ENCODE measurements at regions of chr14 and their contacts with region 1.

Region 1: GRCh38 chr14:97185186-97185585 is 388.0 kb downstream of the VRK1 start:
- DNase-seq: peak in 1 of 2 donors; percentile 64
- ATAC-seq: peak; percentile 55 to 72 (median 60)
- H3K4me3 ChIP-seq: no peak overlapping the region
- H3K4me3 Mint-ChIP-seq: no peak overlapping the region
- H3K27ac ChIP-seq: no peak overlapping the region
- H3K27ac Mint-ChIP-seq: peak overlapping the region in 1 of 2 donors; percentile 27
- H3K4me1 ChIP-seq: no peaks in the 10 kb centered on the region
- H3K4me1 Mint-ChIP-seq: peaks cover 12 to 16% of the 10 kb centered on the region in 2 donors
- H3K27me3 ChIP-seq: no peaks in the 10 kb centered on the region
- H3K27me3 Mint-ChIP-seq: peaks cover 6 to 20% of the 10 kb centered on the region in 2 donors
- CTCF ChIP-seq: no peak

Region 2: DNA sequence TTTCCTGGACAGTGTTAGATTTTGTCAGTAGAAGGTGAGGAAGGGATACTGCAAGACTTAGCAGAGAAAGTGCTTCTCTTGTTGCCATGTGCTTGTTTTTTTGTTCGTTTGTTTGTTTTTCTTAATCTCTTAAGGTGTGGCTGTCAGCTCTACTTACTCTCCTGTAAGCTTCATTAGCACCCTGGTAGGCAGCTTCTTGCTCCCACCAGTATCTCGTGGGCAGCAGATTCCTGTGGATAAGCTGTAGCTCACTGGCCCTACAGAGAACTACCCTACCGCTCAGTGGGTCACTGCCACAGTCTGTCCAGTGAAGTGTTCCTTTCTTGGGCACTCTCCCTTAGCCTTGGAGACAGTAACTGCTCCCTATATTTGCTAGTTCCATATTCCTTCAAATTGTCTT is 357.9 kb before region 1 on chr14:
- intact Hi-C with region 1: no loop called
- DNase-seq: no peak
- ATAC-seq: no peak
- H3K4me3 ChIP-seq: no peak overlapping the region
- H3K4me3 Mint-ChIP-seq: no peak overlapping the region
- H3K27ac ChIP-seq: no peak overlapping the region
- H3K27ac Mint-ChIP-seq: no peak overlapping the region
- H3K4me1 ChIP-seq: no peaks in the 10 kb centered on the region
- H3K4me1 Mint-ChIP-seq: peaks cover 19 to 38% of the 10 kb centered on the region in 2 donors
- H3K27me3 ChIP-seq: no peaks in the 10 kb centered on the region
- H3K27me3 Mint-ChIP-seq: no peaks in the 10 kb centered on the region
- CTCF ChIP-seq: no peak

Region 3: GRCh38 chr14:97581016-97581415 is 395.8 kb after region 1 on chr14:
- intact Hi-C with region 1: loop called (anchors 10 kb)
- DNase-seq: no peak
- ATAC-seq: no peak
- H3K4me3 ChIP-seq: no peak overlapping the region
- H3K4me3 Mint-ChIP-seq: no peak overlapping the region
- H3K27ac ChIP-seq: no peak overlapping the region
- H3K27ac Mint-ChIP-seq: no peak overlapping the region
- H3K4me1 ChIP-seq: no peaks in the 10 kb centered on the region
- H3K4me1 Mint-ChIP-seq: peaks cover 6 to 13% of the 10 kb centered on the region in 2 donors
- H3K27me3 ChIP-seq: no peaks in the 10 kb centered on the region
- H3K27me3 Mint-ChIP-seq: peaks cover 0 to 4% of the 10 kb centered on the region in 2 donors
- CTCF ChIP-seq: no peak

Region 4: GRCh38 chr14:97788364-97788763 is 603.2 kb after region 1 on chr14:
- intact Hi-C with region 1: loop called (anchors 10 kb)
- DNase-seq: no peak
- ATAC-seq: no peak
- H3K4me3 ChIP-seq: no peak overlapping the region
- H3K4me3 Mint-ChIP-seq: no peak overlapping the region
- H3K27ac ChIP-seq: no peak overlapping the region
- H3K27ac Mint-ChIP-seq: no peak overlapping the region
- H3K4me1 ChIP-seq: no peaks in the 10 kb centered on the region
- H3K4me1 Mint-ChIP-seq: peaks cover 13 to 14% of the 10 kb centered on the region in 2 donors
- H3K27me3 ChIP-seq: no peaks in the 10 kb centered on the region
- H3K27me3 Mint-ChIP-seq: peaks cover 0 to 3% of the 10 kb centered on the region in 2 donors
- CTCF ChIP-seq: no peak

Measured in natural killer cell (primary cell).